ENCODE measurements at regions of chr20 and their contacts with region 1.

Region 1: GRCh38 chr20:9616833-9617489 is 102.6 kb downstream of the LAMP5 start:
- DNase-seq: no peak
- ATAC-seq: peak; percentile 87
- H3K4me3 ChIP-seq: no peak overlapping the region
- H3K27ac ChIP-seq: no peak overlapping the region
- H3K4me1 ChIP-seq: peaks cover 18% of the 10 kb centered on the region
- H3K27me3 ChIP-seq: no peaks in the 10 kb centered on the region
- CTCF ChIP-seq: peak; percentile 74 to 84 (median 80)
- EP300 ChIP-seq: no peak
- POLR2A ChIP-seq: no peak
- RAD21 ChIP-seq: peak; percentile 94

Region 2: GRCh38 chr20:9590189-9590588 is 26.8 kb before region 1 on chr20:
- CTCF ChIA-PET with region 1: no interaction called
- POLR2A ChIA-PET with region 1: no interaction called
- RAD21 ChIA-PET with region 1: no interaction called
- SMC1A ChIA-PET with region 1: no interaction called
- in situ Hi-C with region 1: no loop called
- intact Hi-C with region 1: no loop called
- DNase-seq: no peak
- ATAC-seq: no peak
- H3K4me3 ChIP-seq: no peak overlapping the region
- H3K27ac ChIP-seq: no peak overlapping the region
- H3K4me1 ChIP-seq: no peaks in the 10 kb centered on the region
- H3K27me3 ChIP-seq: no peaks in the 10 kb centered on the region
- CTCF ChIP-seq: no peak
- EP300 ChIP-seq: no peak
- POLR2A ChIP-seq: no peak
- RAD21 ChIP-seq: no peak

Region 3: DNA sequence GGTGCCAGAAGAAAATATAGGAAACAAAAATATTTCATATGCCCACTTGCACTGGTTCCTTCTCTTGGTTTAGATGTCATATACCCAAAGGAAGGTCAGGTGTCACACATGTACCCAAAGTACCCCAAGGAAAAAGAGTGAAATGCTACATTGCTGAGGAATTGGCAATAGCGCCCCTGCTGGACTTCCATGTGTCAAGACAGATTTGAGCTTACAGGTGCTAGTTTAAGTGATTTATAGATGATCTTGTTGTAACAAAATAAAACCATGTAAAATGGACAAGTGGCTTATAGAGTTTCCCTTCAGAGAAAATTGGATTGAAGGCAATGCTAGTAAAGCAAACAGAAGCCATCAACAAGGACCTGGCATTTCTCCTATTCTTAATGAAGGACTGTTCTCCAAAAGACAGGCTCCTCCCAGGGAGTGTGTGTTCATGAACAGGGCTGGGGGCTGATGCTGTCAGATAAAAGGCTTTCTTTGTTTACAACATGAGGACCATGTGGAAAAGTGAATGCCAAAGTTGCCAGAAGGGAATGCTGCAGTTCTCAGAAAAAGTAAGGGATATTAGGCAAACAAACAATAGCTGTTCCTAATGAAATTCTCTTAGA is 286.2 kb after region 1 on chr20:
- CTCF ChIA-PET with region 1: interaction called, 83 read pairs
- POLR2A ChIA-PET with region 1: no interaction called
- RAD21 ChIA-PET with region 1: interaction called, 3 read pairs
- SMC1A ChIA-PET with region 1: no interaction called
- in situ Hi-C with region 1: no loop called
- intact Hi-C with region 1: no loop called
- DNase-seq: no peak
- ATAC-seq: peak; percentile 53; the same call in 2 of the 3 replicates
- H3K4me3 ChIP-seq: no peak overlapping the region
- H3K27ac ChIP-seq: no peak overlapping the region
- H3K4me1 ChIP-seq: no peaks in the 10 kb centered on the region
- H3K27me3 ChIP-seq: no peaks in the 10 kb centered on the region; a peak in 1 of 4 replicates
- CTCF ChIP-seq: peak; percentile 44 to 61 (median 61)
- EP300 ChIP-seq: no peak
- POLR2A ChIP-seq: no peak
- RAD21 ChIP-seq: no peak

Region 4: GRCh38 chr20:9966966-9967365 is 350.0 kb after region 1 on chr20:
- CTCF ChIA-PET with region 1: interaction called, 3 read pairs
- POLR2A ChIA-PET with region 1: no interaction called
- RAD21 ChIA-PET with region 1: no interaction called
- SMC1A ChIA-PET with region 1: no interaction called
- in situ Hi-C with region 1: no loop called
- intact Hi-C with region 1: loop called (anchors 5 kb)
- DNase-seq: no peak
- ATAC-seq: peak; percentile 34; the same call in 1 of the 3 replicates
- H3K4me3 ChIP-seq: no peak overlapping the region
- H3K27ac ChIP-seq: no peak overlapping the region
- H3K4me1 ChIP-seq: no peaks in the 10 kb centered on the region
- H3K27me3 ChIP-seq: no peaks in the 10 kb centered on the region
- CTCF ChIP-seq: peak; percentile 12 to 29 (median 27); a peak in 3 of 6 replicates
- EP300 ChIP-seq: no peak
- POLR2A ChIP-seq: no peak
- RAD21 ChIP-seq: 0 out of 2 replicates have a peak, but pooled peaks have one; percentile 36

Region 5: DNA sequence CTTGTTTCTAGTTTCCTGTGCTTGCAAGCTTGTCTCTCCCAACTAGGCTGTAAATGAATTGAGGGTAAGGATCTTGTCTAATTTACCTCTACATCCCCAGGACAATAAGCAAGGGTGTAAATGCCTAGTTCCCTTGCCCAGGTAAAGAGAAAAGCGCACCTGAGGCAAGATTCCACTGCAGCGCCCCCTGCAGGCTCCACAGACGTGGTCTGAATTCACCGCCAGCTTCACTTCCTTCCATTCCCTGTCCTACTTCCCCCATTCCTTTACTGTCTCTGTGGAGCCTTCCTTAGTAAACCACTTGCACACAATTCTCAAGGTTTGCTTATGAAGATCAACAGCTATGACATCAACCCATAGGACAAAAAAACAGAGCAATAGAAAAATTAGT is 460.1 kb after region 1 on chr20:
- CTCF ChIA-PET with region 1: interaction called, 5 read pairs
- POLR2A ChIA-PET with region 1: no interaction called
- RAD21 ChIA-PET with region 1: no interaction called
- SMC1A ChIA-PET with region 1: interaction called, 4 read pairs
- in situ Hi-C with region 1: no loop called
- intact Hi-C with region 1: loop called (anchors 5 kb)
- DNase-seq: no peak
- ATAC-seq: no peak
- H3K4me3 ChIP-seq: no peak overlapping the region
- H3K27ac ChIP-seq: no peak overlapping the region
- H3K4me1 ChIP-seq: no peaks in the 10 kb centered on the region
- H3K27me3 ChIP-seq: no peaks in the 10 kb centered on the region; a peak in 1 of 4 replicates
- CTCF ChIP-seq: peak; percentile 12 to 41 (median 24); a peak in 4 of 6 replicates
- EP300 ChIP-seq: no peak
- POLR2A ChIP-seq: no peak
- RAD21 ChIP-seq: no peak

Region 6: GRCh38 chr20:10225439-10226060 is 608.6 kb after region 1 on chr20:
- CTCF ChIA-PET with region 1: no interaction called
- POLR2A ChIA-PET with region 1: no interaction called
- RAD21 ChIA-PET with region 1: no interaction called
- SMC1A ChIA-PET with region 1: no interaction called
- in situ Hi-C with region 1: no loop called
- intact Hi-C with region 1: loop called (anchors 5 kb)
- DNase-seq: no peak
- ATAC-seq: peak; percentile 66
- H3K4me3 ChIP-seq: no peak overlapping the region
- H3K27ac ChIP-seq: no peak overlapping the region
- H3K4me1 ChIP-seq: no peaks in the 10 kb centered on the region
- H3K27me3 ChIP-seq: no peaks in the 10 kb centered on the region
- CTCF ChIP-seq: peak in 1 of 3 experiments; percentile 24; a peak in 2 of 6 replicates
- EP300 ChIP-seq: no peak
- POLR2A ChIP-seq: no peak
- RAD21 ChIP-seq: peak; percentile 20; the same call in 1 of the 2 replicates

Region 7: DNA sequence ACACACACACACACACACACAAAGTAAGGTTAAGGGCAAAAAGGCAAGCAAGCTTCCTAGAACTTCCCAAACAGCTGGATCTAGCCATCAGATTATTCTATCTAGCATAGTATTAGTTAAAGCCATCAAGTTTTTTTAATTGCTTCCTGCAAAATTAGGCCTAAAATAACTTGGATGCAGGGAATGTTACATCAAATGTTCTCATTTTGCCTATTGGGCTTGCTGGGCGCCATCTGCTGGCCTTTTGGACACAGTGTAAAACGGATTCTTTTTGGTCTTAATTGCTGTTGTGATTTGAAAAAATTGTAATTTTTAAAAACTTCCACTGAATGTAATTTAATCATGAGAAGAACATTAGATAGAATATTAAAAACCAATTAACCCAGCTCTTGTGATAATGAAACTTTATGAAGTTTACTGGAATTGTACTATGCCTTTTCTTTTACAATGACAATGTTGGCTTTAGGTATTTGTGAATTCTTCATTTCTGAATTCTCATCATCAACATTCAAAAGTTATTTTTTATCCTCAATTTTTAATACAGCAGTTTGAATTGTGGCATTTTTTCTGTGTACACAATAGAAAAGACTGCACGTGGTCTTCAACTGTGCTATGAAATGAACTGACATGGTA is 810.2 kb after region 1 on chr20:
- CTCF ChIA-PET with region 1: interaction called, 12 read pairs
- POLR2A ChIA-PET with region 1: no interaction called
- RAD21 ChIA-PET with region 1: no interaction called
- SMC1A ChIA-PET with region 1: interaction called, 3 read pairs
- in situ Hi-C with region 1: loop called (anchors 10 kb)
- intact Hi-C with region 1: loop called (anchors 5 kb)
- DNase-seq: no peak
- ATAC-seq: peak; percentile 37
- H3K4me3 ChIP-seq: no peak overlapping the region
- H3K27ac ChIP-seq: no peak overlapping the region
- H3K4me1 ChIP-seq: peaks cover 18% of the 10 kb centered on the region
- H3K27me3 ChIP-seq: no peaks in the 10 kb centered on the region
- CTCF ChIP-seq: peak; percentile 75 to 78 (median 75)
- EP300 ChIP-seq: no peak
- POLR2A ChIP-seq: no peak
- RAD21 ChIP-seq: peak; percentile 63

Region 8: GRCh38 chr20:11544029-11544678 is 1927.2 kb after region 1 on chr20:
- CTCF ChIA-PET with region 1: interaction called, 12 read pairs
- POLR2A ChIA-PET with region 1: no interaction called
- RAD21 ChIA-PET with region 1: interaction called, 5 read pairs
- SMC1A ChIA-PET with region 1: no interaction called
- in situ Hi-C with region 1: no loop called
- intact Hi-C with region 1: loop called (anchors 5 kb)
- DNase-seq: peak; percentile 40
- ATAC-seq: peak; percentile 97
- H3K4me3 ChIP-seq: no peak overlapping the region
- H3K27ac ChIP-seq: no peak overlapping the region
- H3K4me1 ChIP-seq: no peaks in the 10 kb centered on the region
- H3K27me3 ChIP-seq: no peaks in the 10 kb centered on the region
- CTCF ChIP-seq: peak; percentile 33 to 76 (median 39); a peak in 4 of 6 replicates
- EP300 ChIP-seq: no peak
- POLR2A ChIP-seq: no peak
- RAD21 ChIP-seq: peak; percentile 86

Measured in GM12878 (cell line).